ENCODE measurements at regions of chr4 and their contacts with region 1.

Region 1: DNA sequence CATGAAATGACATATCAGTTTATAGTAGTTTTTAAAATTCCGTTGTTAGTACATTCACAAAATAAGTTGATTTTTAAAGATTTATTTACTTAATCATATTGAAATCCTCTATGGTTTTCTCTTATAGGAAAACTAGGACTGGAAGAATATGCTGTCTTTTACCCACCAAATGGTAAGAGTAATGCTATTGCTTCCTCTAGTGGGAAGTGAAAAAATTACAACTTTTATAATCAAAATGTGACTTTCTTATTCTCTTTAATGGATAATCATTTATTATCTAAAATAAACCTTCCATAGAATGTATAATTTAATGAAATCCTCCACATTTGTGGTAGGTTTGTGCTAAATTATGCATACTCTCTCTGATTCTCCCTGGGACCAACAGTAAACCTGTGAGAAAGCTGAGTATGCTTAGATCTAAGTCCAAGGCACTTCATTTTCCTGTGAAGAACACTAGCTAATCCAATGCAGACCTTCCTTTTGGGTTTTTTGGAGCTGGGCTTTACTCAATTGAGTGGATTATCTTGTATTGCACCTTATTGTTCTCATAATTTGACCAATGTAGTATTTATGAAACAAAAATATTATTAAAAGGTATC is 136.2 kb downstream of the TBC1D19 start:
- DNase-seq: no peak
- H3K4me3 ChIP-seq: no peak overlapping the region
- H3K27ac ChIP-seq: no peak overlapping the region
- H3K4me1 ChIP-seq: no peaks in the 10 kb centered on the region
- H3K27me3 ChIP-seq: no peaks in the 10 kb centered on the region
- CTCF ChIP-seq: peak in 3 of 4 experiments; percentile 27 to 58 (median 47)
- POLR2A ChIP-seq: no peak

Region 2: DNA sequence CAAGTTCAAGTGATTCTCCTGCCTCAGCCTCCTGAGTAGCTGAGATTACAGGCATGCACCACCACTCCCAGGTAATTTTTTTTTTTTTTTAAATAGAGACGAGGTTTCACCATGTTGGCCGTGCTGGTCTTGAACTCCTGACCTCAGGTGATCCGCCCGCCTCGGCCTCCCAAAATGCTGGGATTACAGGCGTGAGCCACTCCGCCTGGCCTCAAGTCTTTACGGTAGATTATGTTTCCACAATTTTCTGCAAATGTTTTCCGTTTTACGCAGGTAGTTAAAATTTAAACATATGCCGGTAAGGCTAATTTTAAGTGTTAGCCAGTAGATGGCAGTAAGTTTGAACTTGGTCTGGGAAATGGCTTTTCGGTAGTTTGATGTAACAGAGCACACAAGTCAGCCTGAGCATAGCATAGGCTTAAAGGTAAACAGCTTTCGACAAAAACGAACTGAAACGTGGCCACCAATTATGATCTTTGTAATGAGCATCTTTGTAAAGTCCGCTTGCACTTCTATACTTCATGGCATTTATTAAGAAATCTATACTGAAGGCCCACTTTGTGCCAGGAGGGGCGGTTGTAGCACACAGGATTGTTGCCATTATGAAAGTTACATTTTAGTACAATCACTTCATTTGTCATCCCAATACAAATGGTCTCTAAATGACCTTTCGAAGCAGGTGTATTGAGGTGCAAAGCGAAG is 260.8 kb before region 1 on chr4:
- intact Hi-C with region 1: loop called (anchors 2 kb)
- DNase-seq: no peak
- H3K4me3 ChIP-seq: no peak overlapping the region
- H3K27ac ChIP-seq: no peak overlapping the region
- H3K4me1 ChIP-seq: no peaks in the 10 kb centered on the region
- H3K27me3 ChIP-seq: no peaks in the 10 kb centered on the region
- CTCF ChIP-seq: peak; percentile 42 to 55 (median 52)
- POLR2A ChIP-seq: no peak

Region 3: DNA sequence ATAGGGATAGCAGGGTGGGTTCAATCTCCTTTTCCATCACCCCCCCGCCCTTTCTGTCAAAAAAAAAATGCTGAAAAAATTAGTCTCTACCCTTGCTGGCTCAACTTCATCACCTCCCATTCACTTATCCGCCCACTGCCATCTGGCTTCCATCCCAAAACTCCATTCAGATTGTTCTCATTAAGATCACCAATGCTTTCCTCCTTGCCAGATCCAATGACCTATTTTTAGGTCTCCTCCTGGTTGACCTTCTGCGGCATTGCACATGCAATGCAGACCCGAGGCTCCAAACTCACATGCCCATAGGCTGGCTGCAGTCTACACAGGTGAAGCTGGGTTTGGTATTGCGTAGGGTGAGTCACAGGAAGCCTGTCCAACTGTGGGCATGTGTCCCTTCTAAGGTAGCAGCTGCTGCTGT is 119.5 kb after region 1 on chr4:
- intact Hi-C with region 1: no loop called
- DNase-seq: no peak
- H3K4me3 ChIP-seq: no peak overlapping the region
- H3K27ac ChIP-seq: no peak overlapping the region
- H3K4me1 ChIP-seq: no peaks in the 10 kb centered on the region
- H3K27me3 ChIP-seq: no peaks in the 10 kb centered on the region
- CTCF ChIP-seq: no peak
- POLR2A ChIP-seq: no peak

Region 4: GRCh38 chr4:27115221-27115620 is 395.2 kb after region 1 on chr4:
- intact Hi-C with region 1: no loop called
- DNase-seq: no peak
- H3K4me3 ChIP-seq: no peak overlapping the region
- H3K27ac ChIP-seq: no peak overlapping the region
- H3K4me1 ChIP-seq: no peaks in the 10 kb centered on the region
- H3K27me3 ChIP-seq: no peaks in the 10 kb centered on the region
- CTCF ChIP-seq: no peak
- POLR2A ChIP-seq: no peak

Measured in prostate gland (tissue), 2 donors.